Heart left ventricle (tissue), 16 donors: ENCODE measurements at regions of chr5 and their contacts with region 1.

Region 1: GRCh38 chr5:150217873-150218692 is 28.2 kb downstream of the SLC6A7 start:
- DNase-seq: peak; percentile 84 to 89 (median 85)
- ATAC-seq: peak; percentile 77 to 88 (median 82)
- H3K4me3 ChIP-seq: no peak overlapping the region
- H3K27ac ChIP-seq: peak overlapping the region in 1 of 12 donors; percentile 7
- H3K4me1 ChIP-seq: peaks cover 0 to 34% (median 17%) of the 10 kb centered on the region in 12 donors
- H3K27me3 ChIP-seq: no peaks in the 10 kb centered on the region
- CTCF ChIP-seq: peak; percentile 88 to 97 (median 93)
- POLR2A ChIP-seq: no peak

Region 2: DNA sequence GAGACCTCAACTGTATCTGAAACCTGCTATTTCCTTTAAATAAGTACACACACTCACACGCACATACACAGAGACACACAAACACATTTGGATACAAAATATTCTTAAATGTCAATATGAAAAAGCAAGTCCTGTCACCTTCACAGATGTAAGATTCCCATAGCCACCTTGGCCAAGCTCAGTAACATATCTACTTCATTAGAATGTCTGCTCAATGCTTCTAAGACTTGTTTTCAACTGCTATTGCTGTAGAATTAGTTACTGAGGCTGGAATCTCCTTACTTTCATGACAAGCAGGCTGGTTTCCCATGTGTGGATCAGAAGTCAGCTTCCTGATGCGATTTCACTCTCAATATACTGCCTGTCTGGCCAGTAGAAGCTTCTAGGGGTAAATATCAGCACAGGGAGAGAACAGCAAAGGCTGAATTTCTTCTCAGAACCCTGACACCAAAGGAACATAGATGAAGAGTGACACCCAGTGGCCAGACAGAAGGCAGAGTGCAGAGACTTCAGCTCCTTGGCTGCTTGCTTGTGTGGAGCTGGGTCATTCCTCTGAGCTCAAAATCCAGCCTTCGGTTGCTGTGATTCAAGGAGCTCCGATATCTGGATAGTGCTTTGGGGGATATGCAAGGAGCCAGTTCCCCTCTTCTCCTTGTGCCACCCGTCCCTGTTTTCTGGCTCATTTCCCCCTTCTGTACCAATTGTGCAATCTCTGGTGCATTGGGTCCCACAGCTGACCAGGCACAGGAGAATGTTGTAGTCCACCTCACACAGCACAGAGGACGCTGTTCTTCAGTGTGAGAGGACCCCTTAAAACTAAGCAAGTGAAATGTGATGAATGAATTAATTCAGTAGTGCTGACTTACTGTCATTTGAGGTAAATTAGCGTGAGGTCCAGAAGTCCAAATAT is 1103.4 kb before region 1 on chr5:
- intact Hi-C with region 1: no loop called
- DNase-seq: peak; percentile 49 to 73 (median 55)
- ATAC-seq: peak; percentile 85 to 97 (median 95)
- H3K4me3 ChIP-seq: no peak overlapping the region
- H3K27ac ChIP-seq: peak overlapping the region in 7 of 12 donors; percentile 2 to 62 (median 38)
- H3K4me1 ChIP-seq: peaks cover 0 to 10% (median 4%) of the 10 kb centered on the region in 12 donors
- H3K27me3 ChIP-seq: no peaks in the 10 kb centered on the region
- CTCF ChIP-seq: peak; percentile 49 to 85 (median 75)
- POLR2A ChIP-seq: no peak

Region 3: GRCh38 chr5:149636851-149637246 is 581.2 kb before region 1 on chr5:
- intact Hi-C with region 1: loop called in 1 of 10 experiments (anchors 10 kb)
- DNase-seq: peak in 3 of 5 donors; percentile 87 to 93 (median 92)
- ATAC-seq: peak; percentile 51 to 68 (median 64)
- H3K4me3 ChIP-seq: no peak overlapping the region
- H3K27ac ChIP-seq: no peak overlapping the region
- H3K4me1 ChIP-seq: peaks cover 0 to 38% (median 27%) of the 10 kb centered on the region in 12 donors
- H3K27me3 ChIP-seq: no peaks in the 10 kb centered on the region
- CTCF ChIP-seq: peak; percentile 62 to 94 (median 84)
- POLR2A ChIP-seq: no peak

Region 4: DNA sequence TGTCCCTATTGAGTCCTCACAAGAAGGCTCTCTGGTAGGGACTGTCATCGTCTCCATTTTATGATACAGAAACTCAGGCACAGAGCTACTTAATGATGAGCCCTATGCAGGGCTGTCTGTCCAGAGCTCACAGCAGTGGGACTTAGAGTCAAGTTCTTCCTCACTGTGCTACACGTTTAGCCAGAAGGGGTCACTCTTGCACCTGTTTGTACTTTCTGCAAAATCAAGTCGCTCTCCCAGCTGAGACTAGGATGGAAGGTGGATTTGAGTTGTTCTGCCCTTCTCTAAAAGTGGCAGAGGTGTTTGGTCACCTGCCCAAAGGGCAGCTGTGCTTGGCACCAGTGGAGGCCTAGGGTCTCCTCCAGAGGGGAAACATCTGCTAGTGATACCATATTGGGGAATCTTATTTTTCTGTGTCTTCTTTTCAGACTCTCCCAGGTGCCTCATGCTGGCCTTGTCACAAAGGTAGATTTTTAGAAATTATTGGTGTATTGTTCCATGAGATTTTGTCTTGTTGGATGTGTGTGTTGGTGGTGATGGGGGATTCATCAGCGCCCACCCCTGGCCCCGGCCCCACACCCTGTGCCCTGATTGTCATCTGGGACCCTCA is 383.7 kb before region 1 on chr5:
- intact Hi-C with region 1: loop called in 1 of 10 experiments (anchors 10 kb)
- DNase-seq: peak in 1 of 5 donors; percentile 56
- ATAC-seq: peak in 3 of 4 donors; percentile 24 to 44 (median 32)
- H3K4me3 ChIP-seq: no peak overlapping the region
- H3K27ac ChIP-seq: peak overlapping the region in 3 of 12 donors; percentile 5 to 39 (median 9)
- H3K4me1 ChIP-seq: peaks cover 0 to 29% (median 9%) of the 10 kb centered on the region in 12 donors
- H3K27me3 ChIP-seq: no peaks in the 10 kb centered on the region
- CTCF ChIP-seq: peak; percentile 28 to 74 (median 58)
- POLR2A ChIP-seq: no peak

Region 5: DNA sequence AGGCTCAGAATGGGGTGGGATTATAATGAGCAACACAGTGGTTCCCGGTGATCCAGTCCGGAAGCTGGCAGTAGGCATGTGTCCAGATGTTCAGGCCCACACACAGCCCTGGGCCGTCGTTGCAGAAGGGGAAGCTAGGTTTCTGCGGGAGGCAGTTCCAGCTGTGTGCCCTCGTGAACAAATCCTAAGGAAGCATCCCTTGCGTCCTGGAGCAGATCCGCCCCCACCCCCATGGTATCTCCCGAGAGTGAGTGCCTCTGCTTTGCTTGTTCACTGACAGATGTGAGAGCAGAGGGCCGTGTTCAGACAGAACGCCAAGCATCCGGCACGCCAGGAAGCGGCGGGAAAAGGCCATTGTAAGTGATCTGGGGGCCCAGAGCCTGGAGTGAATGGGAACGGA is 378.3 kb before region 1 on chr5:
- intact Hi-C with region 1: loop called in 2 of 10 experiments (anchors 10 kb)
- DNase-seq: no peak
- ATAC-seq: peak in 3 of 4 donors; percentile 16 to 29 (median 20)
- H3K4me3 ChIP-seq: no peak overlapping the region
- H3K27ac ChIP-seq: peak overlapping the region in 11 of 12 donors; percentile 4 to 67 (median 37)
- H3K4me1 ChIP-seq: peaks cover 0 to 54% (median 21%) of the 10 kb centered on the region in 12 donors
- H3K27me3 ChIP-seq: no peaks in the 10 kb centered on the region
- CTCF ChIP-seq: no peak
- POLR2A ChIP-seq: no peak

Region 6: GRCh38 chr5:149860801-149861322 is 357.2 kb before region 1 on chr5:
- intact Hi-C with region 1: no loop called
- DNase-seq: no peak
- ATAC-seq: no peak
- H3K4me3 ChIP-seq: no peak overlapping the region
- H3K27ac ChIP-seq: no peak overlapping the region
- H3K4me1 ChIP-seq: peaks cover 0 to 24% (median 10%) of the 10 kb centered on the region in 12 donors
- H3K27me3 ChIP-seq: no peaks in the 10 kb centered on the region
- CTCF ChIP-seq: no peak
- POLR2A ChIP-seq: no peak

Region 7: GRCh38 chr5:150022163-150022540 is 195.9 kb before region 1 on chr5:
- intact Hi-C with region 1: loop called in 9 of 10 experiments (anchors 5 to 10 kb)
- DNase-seq: peak in 1 of 5 donors; percentile 36
- ATAC-seq: peak; percentile 48 to 79 (median 76)
- H3K4me3 ChIP-seq: peak overlapping the region in 3 of 12 donors; percentile 1 to 16 (median 13)
- H3K27ac ChIP-seq: peak overlapping the region; percentile 53 to 81 (median 68)
- H3K4me1 ChIP-seq: peaks cover 5 to 54% (median 40%) of the 10 kb centered on the region in 12 donors
- H3K27me3 ChIP-seq: no peaks in the 10 kb centered on the region
- CTCF ChIP-seq: no peak
- POLR2A ChIP-seq: no peak

Region 8: GRCh38 chr5:150129813-150130492 is 88.1 kb before region 1 on chr5:
- intact Hi-C with region 1: loop called (anchors 1 to 2 kb)
- DNase-seq: peak; percentile 73 to 85 (median 79)
- ATAC-seq: peak; percentile 47 to 83 (median 75)
- H3K4me3 ChIP-seq: peak overlapping the region in 7 of 12 donors; percentile 3 to 43 (median 6)
- H3K27ac ChIP-seq: peak overlapping the region in 7 of 12 donors; percentile 3 to 34 (median 20)
- H3K4me1 ChIP-seq: peaks cover 0 to 48% (median 19%) of the 10 kb centered on the region in 12 donors
- H3K27me3 ChIP-seq: no peaks in the 10 kb centered on the region
- CTCF ChIP-seq: peak; percentile 86 to 97 (median 92)
- POLR2A ChIP-seq: no peak

Region 9: DNA sequence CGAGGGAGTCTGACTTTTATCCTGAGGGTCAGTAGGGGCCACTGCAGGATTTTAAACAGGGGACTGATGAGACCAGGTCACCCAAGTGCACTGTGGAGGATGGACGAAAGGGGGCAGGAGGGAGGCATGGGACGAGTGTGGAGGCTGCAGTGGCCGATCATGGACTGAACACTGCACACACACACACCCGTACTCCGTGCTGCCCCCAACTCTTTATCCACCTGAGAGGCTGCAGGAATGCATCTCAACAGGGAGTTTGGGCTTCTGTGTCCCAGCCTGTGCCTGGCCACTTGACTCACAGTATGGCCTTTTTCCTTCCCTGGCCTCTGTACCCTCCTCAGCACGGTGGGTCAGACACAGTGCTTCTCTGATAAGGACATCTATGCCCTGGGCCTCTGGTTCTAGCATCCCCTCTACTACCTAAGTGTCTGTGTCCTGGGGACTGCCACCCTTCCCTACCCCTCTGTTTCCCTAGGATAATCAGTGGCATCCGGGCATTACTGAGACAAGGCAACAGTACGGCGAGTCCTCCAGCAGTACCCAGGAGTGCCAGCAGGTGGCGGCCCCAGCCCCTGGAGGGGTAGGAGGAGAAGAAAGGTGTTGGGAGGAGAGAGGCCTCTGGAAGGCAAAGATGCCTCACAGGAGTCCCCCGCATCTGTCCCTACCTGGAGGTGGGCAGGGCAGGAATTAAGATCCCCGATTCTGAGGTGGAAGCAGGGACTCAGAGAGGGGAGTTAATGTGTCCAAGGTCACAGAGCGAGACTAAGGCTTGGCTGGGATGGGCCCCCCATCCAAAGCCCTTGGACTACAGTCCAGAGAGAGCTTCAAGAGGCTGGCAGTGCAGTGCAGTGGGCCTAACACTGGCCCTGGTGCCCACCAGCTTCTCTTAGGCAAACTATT is 56.6 kb before region 1 on chr5:
- intact Hi-C with region 1: loop called (anchors 1 to 2 kb)
- DNase-seq: peak; percentile 82 to 91 (median 83)
- ATAC-seq: peak; percentile 41 to 70 (median 56)
- H3K4me3 ChIP-seq: no peak overlapping the region
- H3K27ac ChIP-seq: peak overlapping the region in 11 of 12 donors; percentile 37 to 96 (median 84)
- H3K4me1 ChIP-seq: peaks cover 0 to 85% (median 58%) of the 10 kb centered on the region in 12 donors
- H3K27me3 ChIP-seq: peaks cover 0 to 4% (median 0%) of the 10 kb centered on the region in 9 donors
- CTCF ChIP-seq: peak; percentile 83 to 95 (median 91)
- POLR2A ChIP-seq: no peak